ENCODE measurements at regions of chr9 and their contacts with region 1.

Region 1: DNA sequence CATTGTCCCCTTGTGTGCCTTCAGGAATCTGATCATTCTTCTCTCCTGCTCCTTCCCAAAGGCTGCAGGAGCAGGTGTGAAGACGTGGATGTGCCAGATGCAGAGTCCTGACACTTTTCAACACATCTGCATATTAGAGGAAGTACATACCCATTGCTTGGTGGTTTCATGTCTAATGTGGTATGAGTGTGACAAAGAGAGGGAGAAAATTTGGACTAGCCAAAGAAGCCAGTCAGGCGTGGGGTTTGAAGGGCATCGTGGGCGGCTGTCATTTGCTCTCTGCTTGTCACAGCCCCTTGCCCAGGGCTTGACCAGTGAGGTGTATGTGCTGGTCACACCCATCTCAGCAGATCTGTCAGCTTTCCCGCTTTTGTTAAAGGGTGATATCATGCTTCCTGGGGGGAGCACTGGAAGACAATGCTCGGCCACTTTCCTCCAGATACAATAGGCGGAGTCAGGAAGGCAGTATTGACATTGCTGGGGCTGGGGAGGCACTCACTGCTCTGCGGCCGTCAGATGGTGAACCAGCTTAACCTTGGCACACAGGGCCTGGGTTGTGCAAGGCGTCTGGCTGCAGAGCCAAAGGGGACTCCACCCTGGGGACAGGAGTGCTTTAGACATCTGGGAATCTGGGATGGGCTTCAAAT is 8.6 kb downstream of the TEK start:
- DNase-seq: peak; percentile 90
- ATAC-seq: peak; percentile 98 to 99
- H3K4me3 ChIP-seq: no peak overlapping the region
- H3K27ac ChIP-seq: peak overlapping the region; percentile 90
- H3K4me1 ChIP-seq: peaks cover 3% of the 10 kb centered on the region
- H3K27me3 ChIP-seq: no peaks in the 10 kb centered on the region

Region 2: DNA sequence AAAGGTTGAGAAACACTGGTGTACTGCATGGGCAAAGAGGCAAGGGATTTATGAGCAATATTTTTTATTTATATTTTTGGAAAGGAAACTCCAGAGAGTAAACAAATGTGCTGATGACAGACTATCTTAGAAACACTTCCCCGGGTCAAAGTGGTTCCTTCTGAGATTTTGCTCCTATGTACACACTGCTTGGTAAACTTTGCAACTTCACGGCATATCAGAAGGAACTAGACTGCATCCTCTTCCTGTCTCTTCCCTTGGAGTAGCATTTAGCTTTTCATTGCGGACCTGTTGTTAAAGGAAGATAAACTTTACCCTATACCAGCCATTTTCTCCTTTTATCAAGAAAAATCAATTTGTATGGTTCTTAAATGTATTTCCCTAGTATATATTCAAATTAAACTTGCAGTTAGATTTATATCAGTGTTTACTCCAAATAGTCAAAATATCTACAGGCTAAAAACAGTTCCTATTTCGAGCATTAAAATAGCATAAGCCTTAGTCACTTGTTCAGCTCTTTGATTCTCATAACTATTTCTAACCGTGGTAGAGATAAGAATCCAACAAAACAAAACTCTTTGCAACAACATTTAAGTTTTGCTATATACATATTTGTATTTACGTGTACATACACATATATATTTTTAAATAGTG is 64.1 kb before region 1 on chr9:
- intact Hi-C with region 1: no loop called
- DNase-seq: no peak
- ATAC-seq: peak; percentile 82 to 90
- H3K4me3 ChIP-seq: no peak overlapping the region
- H3K27ac ChIP-seq: no peak overlapping the region
- H3K4me1 ChIP-seq: no peaks in the 10 kb centered on the region
- H3K27me3 ChIP-seq: no peaks in the 10 kb centered on the region

Region 3: GRCh38 chr9:27184556-27185351 is 67.1 kb after region 1 on chr9:
- intact Hi-C with region 1: loop called in 1 of 4 experiments (anchors 10 kb)
- DNase-seq: peak in 1 of 3 donors; percentile 31
- ATAC-seq: peak in 1 of 2 donors; percentile 68
- H3K4me3 ChIP-seq: no peak overlapping the region
- H3K27ac ChIP-seq: peak overlapping the region; percentile 75
- H3K4me1 ChIP-seq: no peaks in the 10 kb centered on the region
- H3K27me3 ChIP-seq: no peaks in the 10 kb centered on the region

Measured in right cardiac atrium (tissue), 5 donors.